ENCODE measurements at regions of chrX and their contacts with region 1.

Region 1: GRCh38 chrX:25020905-25021449 is 5.2 kb upstream of the ARX start:
- DNase-seq: no peak
- H3K4me3 ChIP-seq: no peak overlapping the region
- CTCF ChIP-seq: no peak
- POLR2A ChIP-seq: no peak

Region 2: DNA sequence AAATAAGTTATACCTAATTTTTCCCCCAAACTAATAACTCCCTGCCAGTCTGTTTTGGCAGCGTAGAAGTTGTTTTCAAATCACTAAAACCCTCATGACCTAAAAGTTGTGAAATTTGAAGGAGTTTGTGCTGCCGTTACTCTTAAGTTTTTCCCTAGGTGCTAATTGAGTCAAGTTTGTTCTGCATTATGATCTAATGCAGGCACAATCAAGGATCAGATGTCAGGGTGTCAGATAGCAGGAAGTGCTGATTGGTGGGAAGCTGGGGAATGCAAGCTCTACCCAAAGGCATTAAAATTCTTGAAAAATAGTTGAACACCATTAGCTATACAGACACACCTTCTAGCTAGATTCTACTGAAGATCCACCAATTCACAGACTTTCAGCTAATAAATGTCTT is 57.2 kb before region 1 on chrX:
- intact Hi-C with region 1: loop called (anchors 10 kb)
- DNase-seq: no peak
- H3K4me3 ChIP-seq: no peak overlapping the region
- CTCF ChIP-seq: no peak
- POLR2A ChIP-seq: no peak

Region 3: DNA sequence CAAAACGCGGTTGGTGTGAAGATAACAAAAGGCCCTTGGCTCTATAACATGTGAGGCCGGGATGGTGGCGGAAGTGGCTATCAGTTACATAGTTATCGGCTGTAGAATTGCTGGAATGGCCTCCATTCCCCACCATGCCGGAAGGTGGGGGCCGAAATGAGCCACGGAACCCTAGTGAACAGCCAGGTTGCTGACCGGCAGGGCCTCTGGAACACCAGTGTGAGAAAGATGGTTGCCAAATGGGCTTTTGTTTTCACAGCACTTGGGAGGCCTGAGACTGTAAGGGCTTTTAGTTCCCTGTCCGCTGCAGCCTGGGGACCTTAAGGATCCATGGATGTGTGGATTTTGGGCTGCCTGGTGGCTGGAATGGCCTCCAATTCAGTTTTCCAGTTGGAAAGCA is 18.1 kb after region 1 on chrX:
- intact Hi-C with region 1: no loop called
- DNase-seq: no peak
- H3K4me3 ChIP-seq: no peak overlapping the region
- CTCF ChIP-seq: no peak
- POLR2A ChIP-seq: no peak